Psoas muscle (tissue), 8 donors: ENCODE measurements at regions of chr10 and their contacts with region 1.

Region 1: DNA sequence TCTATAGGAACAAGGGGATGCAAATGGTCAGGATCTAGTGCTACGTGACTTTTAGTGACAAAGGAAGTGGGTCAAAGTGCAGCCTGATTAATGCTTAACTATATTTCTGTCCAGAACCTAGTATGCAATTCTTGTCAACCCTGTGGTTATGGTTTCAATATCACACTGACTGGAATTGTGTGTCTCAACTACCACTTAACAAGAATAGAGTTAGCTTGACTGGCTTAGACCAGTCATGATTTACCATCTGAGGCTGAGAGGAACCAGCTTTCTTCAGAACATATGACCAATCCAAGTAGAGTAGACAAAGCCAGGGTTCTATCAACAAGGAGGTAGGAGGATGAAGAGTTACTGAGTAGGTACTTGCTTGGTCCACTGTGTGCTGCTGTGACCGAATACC is 54.4 kb downstream of the MYPN start:
- DNase-seq: no peak
- ATAC-seq: peak; percentile 43 to 77 (median 70)
- H3K4me3 ChIP-seq: no peak overlapping the region
- H3K27ac ChIP-seq: peak overlapping the region; percentile 59
- H3K4me1 ChIP-seq: no peaks in the 10 kb centered on the region
- H3K27me3 ChIP-seq: no peaks in the 10 kb centered on the region
- CTCF ChIP-seq: no peak

Region 2: GRCh38 chr10:67849331-67850011 is 314.3 kb before region 1 on chr10:
- intact Hi-C with region 1: loop called in 1 of 2 experiments (anchors 10 kb)
- DNase-seq: peak; percentile 96 to 98
- ATAC-seq: peak; percentile 98 to 100 (median 98)
- H3K4me3 ChIP-seq: peak overlapping the region; percentile 96
- H3K27ac ChIP-seq: peak overlapping the region; percentile 99
- H3K4me1 ChIP-seq: peaks cover 5% of the 10 kb centered on the region
- H3K27me3 ChIP-seq: no peaks in the 10 kb centered on the region
- CTCF ChIP-seq: peak; percentile 36